ENCODE measurements at regions of chr12 and their contacts with region 1.

Region 1: DNA sequence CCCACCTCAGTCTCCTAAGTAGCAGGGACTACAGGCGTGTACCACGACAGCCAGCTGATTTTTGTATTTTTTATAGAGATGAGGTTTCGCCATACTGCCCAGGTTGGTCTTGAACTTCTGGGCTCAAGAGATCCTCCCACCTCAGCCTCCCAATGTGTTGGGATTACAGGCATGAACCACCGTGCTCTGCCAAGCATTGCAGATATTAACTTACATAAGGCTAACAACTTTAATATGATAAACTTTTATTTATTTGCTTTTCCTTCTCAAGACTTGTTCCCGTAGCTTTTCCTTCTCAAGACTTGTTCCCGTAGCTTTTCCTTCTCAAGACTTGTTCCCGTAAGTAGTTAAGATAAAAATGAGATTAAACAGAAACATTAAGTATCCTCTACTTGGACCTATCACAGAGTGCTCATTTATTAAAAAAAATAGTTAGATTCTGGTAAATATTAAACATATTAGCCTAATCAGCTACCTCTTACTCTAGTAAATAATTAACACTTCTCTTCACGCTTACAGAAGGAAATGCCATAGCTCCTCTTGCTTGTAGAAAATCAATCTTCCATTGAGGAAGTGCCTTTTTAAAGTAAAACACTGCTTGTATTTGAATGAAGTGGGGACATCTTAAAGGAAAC is 157.7 kb upstream of the KITLG start:
- DNase-seq: no peak
- H3K4me3 ChIP-seq: no peak overlapping the region
- H3K27ac ChIP-seq: no peak overlapping the region
- H3K4me1 ChIP-seq: no peaks in the 10 kb centered on the region
- H3K27me3 ChIP-seq: no peaks in the 10 kb centered on the region
- CTCF ChIP-seq: no peak

Region 2: DNA sequence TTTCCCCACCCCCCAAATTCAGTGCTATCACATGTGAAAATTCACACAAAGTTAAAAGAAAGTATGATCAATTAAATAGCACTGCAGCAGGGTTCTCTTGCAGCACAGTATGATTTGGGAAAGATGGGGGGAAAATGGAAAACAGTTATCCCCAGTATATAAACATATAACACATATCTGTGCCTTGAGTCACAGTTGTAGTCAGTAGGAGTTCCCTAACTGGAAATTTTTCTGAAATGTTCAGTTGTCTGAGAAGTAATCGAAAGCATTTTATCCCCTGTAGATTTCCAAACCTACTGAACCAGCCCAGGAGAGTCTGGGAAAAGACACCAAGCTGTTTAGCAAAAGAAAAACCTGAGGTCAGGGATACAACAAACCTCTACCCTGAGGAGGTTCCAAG is 755.7 kb before region 1 on chr12:
- CTCF ChIA-PET with region 1: no interaction called
- POLR2A ChIA-PET with region 1: no interaction called
- intact Hi-C with region 1: no loop called
- DNase-seq: no peak
- H3K4me3 ChIP-seq: no peak overlapping the region
- H3K27ac ChIP-seq: no peak overlapping the region
- H3K4me1 ChIP-seq: no peaks in the 10 kb centered on the region
- H3K27me3 ChIP-seq: no peaks in the 10 kb centered on the region
- CTCF ChIP-seq: no peak

Region 3: DNA sequence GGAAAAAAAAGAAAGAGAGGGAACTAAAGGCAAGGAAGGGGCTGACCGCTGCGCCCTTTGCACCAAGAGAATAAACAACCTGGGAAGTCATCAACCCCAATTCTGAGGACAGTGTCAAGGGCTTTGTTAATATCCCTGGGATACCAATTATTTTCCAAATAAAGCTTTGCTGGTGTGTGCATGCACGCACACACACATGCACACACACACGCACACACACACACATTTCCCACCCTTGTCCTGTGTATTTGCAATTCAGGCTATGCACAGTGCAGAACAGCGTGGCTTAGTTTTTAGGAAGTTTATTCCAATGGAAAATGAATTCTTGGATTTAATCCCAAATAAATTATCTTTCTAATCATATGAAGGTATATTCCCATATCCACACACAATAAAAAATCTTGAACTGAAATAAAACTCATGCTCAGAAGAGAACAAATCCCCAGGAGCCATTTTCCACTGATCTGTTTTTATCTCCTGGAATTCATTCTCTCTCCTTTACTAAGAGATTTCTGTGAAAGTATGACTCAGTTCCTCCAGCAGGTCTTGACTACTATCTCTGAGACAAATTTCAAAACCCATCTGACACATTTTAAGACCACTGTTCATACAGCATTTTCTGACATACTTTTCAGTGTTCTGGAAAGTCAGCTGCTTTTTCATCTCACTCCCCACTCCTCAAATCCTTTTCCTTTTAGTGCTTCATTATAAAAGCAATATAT is 1305.1 kb after region 1 on chr12:
- CTCF ChIA-PET with region 1: no interaction called
- POLR2A ChIA-PET with region 1: interaction called, 16 read pairs
- intact Hi-C with region 1: no loop called
- DNase-seq: no peak
- H3K4me3 ChIP-seq: no peak overlapping the region
- H3K27ac ChIP-seq: no peak overlapping the region
- H3K4me1 ChIP-seq: no peaks in the 10 kb centered on the region
- H3K27me3 ChIP-seq: no peaks in the 10 kb centered on the region
- CTCF ChIP-seq: no peak